CD14-positive monocyte (primary cell): ENCODE measurements at regions of chr10 and their contacts with region 1.

Region 1: GRCh38 chr10:102267748-102268147 is 22.4 kb downstream of the GBF1 start:
- DNase-seq: no peak
- H3K4me3 ChIP-seq: no peak overlapping the region
- H3K4me3 Mint-ChIP-seq: no peak overlapping the region
- H3K27ac ChIP-seq: no peak overlapping the region
- H3K27ac Mint-ChIP-seq: peak overlapping the region in 1 of 7 donors; percentile 20
- H3K4me1 ChIP-seq: no peaks in the 10 kb centered on the region
- H3K4me1 Mint-ChIP-seq: peaks cover 12% of the 10 kb centered on the region
- H3K27me3 ChIP-seq: no peaks in the 10 kb centered on the region
- H3K27me3 Mint-ChIP-seq: no peaks in the 10 kb centered on the region
- CTCF ChIP-seq: no peak

Region 2: GRCh38 chr10:102334101-102334500 is 66.4 kb after region 1 on chr10:
- intact Hi-C with region 1: loop called in 1 of 2 experiments (anchors 2 kb)
- DNase-seq: no peak
- H3K4me3 ChIP-seq: no peak overlapping the region
- H3K4me3 Mint-ChIP-seq: no peak overlapping the region
- H3K27ac ChIP-seq: no peak overlapping the region
- H3K27ac Mint-ChIP-seq: peak overlapping the region in 2 of 7 donors; percentile 32 to 41
- H3K4me1 ChIP-seq: no peaks in the 10 kb centered on the region
- H3K4me1 Mint-ChIP-seq: no peaks in the 10 kb centered on the region
- H3K27me3 ChIP-seq: no peaks in the 10 kb centered on the region
- H3K27me3 Mint-ChIP-seq: peaks cover 0 to 1% (median 0%) of the 10 kb centered on the region in 3 donors
- CTCF ChIP-seq: no peak